Right ventricle myocardium superior (tissue), 1 donor: ENCODE measurements at regions of chr16 and their contacts with region 1.

Region 1: GRCh38 chr16:70342016-70342415 is 4.7 kb upstream of the DDX19A start:
- DNase-seq: no peak
- ATAC-seq: peak; percentile 63

Region 2: DNA sequence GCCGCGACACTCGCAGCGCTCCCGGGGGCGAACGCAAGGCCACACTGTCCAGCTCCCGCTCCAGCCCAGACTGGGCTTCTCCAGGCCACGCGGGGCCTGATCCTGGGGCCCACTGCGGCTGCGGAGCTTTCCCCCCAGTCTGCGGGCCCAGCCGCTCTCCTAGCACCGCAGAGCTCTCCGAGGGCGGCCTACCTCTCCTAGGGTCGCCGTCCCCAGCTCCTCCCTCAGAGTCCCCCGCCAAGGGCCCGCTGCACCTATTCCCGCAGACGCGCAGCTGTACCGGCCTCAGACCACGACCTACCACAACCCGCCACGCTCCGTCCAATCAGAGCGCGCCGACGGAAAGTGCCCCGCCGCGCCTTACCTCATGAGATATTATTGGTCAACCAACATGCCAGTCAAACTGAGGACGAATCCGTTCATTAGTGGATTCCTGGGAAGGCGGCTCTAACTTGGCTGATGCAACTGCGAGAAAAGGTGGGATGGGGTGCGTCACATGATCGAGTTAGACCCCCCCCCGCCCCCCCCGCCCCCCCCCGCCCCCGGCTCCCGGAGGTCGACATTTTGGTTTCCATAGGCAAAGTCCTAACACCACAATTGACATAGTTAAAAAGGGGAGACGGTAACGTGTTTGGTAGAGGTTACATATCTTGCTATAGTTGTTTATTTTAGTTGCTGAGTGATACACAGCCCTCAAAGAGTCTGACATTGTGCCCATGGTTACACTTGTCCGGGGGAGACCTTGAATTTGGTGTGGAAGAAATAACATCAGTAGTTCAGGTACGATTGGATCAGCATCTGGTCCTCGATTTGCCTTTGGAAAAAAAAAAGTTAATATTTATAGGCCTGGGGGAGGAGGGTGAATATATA is 52.6 kb before region 1 on chr16 and contains the start of gene AARS1:
- intact Hi-C with region 1: loop called (anchors 10 kb)
- DNase-seq: peak; percentile 97
- ATAC-seq: peak; percentile 99
- total RNA-seq, gene AARS1: 59.7 TPM

Region 3: GRCh38 chr16:70428178-70428998 is 86.4 kb after region 1 on chr16:
- intact Hi-C with region 1: no loop called
- DNase-seq: peak; percentile 97
- ATAC-seq: peak; percentile 91